GM10248 (cell line): ENCODE measurements at regions of chr9 and their contacts with region 1.

Region 1: DNA sequence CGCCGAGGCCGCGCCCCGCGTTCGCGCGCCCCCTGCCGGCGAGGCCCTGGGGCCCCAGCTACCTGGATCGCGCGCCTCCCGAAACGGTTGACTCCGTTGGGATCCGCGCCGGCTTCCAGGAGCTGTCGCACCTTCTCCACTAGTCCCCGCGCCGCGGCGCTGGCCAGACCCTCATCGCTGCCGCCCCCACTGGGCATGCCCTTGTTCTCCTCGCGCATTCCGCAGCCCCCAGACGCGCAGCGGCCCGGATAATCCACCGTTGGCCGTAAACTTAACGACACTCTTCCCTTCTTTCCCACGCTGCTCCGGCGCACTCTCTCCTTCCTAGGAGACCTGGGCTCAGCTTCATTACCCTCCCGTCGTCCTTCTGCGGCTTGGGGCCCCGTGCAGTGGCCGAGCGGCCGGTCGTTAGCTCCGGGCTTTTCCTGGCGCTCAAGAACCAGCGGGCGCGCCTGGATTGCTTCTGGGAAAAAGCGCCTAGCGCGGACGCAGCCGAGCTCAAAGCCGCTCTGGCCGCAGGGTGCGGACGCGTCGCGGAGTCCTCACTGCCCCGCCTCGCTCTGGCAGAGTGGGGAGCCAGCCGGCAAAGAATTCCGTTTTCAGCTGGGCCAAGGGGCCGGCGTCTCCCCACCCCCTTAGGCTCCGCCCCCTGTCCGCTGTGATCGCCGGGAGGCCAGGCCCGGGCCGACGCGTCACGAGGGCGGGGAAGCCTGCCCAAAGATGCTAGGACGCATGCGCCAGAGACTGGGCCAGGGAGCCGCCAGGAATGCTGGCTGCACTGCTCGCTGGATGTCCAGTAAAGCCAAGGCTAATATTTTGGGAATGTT is at the start of gene CDKN2B:
- DNase-seq: peak; percentile 91
- CTCF ChIP-seq: peak; percentile 91

Region 2: DNA sequence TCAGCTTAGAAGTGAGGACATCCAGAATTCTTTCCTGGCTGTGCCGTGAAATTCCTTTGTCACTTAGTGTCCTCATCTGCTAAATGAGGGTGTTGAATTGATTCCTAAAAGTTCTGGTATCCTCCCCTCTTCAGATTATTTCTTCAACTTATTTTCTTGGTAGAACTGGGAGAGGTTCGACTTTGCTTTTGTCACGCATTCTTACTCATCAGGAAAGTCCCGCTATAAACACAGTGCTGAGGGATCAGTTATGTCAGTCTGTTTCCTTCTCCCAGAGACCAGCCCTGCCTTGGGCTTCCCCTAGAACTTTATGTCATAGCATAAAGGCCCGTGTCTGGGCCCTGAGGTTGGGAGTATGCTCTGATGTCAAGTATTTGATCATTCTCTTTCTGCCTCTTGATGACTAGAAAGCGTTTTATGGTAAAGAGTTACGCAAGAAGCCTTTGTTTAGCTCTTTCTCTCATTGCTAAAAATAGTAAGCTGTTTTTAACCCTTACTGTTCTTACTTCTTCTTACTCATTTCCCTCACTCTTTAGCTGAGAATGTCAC is 176.9 kb before region 1 on chr9:
- CTCF ChIA-PET with region 1: interaction called, 40 read pairs
- POLR2A ChIA-PET with region 1: no interaction called
- DNase-seq: peak; percentile 51
- CTCF ChIP-seq: no peak

Region 3: GRCh38 chr9:21985964-21986667 is 22.8 kb before region 1 on chr9:
- CTCF ChIA-PET with region 1: interaction called, 95 read pairs
- POLR2A ChIA-PET with region 1: no interaction called
- DNase-seq: no peak
- CTCF ChIP-seq: no peak

Region 4: GRCh38 chr9:22030101-22030598 is 21.2 kb after region 1 on chr9:
- CTCF ChIA-PET with region 1: interaction called, 40 read pairs
- POLR2A ChIA-PET with region 1: no interaction called
- DNase-seq: no peak
- CTCF ChIP-seq: no peak

Region 5: DNA sequence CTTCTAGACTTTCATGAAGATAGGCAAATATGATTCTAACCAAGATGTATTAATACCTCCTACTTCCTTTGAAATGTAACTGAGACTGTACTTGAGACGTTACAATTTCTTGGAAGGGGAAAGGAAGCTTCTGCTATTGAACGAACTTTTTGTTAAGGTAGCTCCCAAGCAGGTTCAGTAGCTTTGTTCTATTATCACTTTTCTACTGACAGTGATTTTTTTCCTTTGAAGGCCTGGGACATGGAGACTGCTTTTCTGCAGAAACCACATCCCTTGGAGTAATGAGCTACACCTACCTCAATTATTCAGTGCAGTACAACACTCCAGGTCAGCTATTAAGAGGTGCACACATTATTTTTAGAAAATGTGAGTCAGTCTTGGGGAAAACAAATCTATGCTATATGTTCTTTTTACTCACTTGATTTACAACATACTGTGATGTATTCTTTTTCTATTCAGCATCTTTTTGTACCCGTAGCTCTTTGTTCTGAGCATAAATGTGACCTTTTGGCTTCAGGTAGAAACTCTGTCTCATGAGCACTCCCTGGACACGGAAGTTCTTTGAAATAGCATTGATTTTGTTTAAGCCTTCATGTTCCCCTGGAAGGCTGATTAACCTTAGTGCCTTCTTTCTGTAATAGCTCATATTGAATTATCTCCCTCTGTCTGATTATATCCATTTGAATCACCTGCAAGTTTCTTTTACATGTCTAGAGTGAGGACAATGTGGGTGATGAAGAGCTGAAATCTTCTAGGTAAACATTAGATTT is 56.7 kb after region 1 on chr9:
- CTCF ChIA-PET with region 1: interaction called, 11 read pairs
- POLR2A ChIA-PET with region 1: no interaction called
- DNase-seq: no peak
- CTCF ChIP-seq: no peak